HEK293 (cell line): ENCODE measurements at regions of chr3 and their contacts with region 1.

Region 1: GRCh38 chr3:13461169-13462158 is 18.6 kb upstream of the HDAC11 start:
- H3K4me3 ChIP-seq: no peak overlapping the region
- H3K27ac ChIP-seq: no peak overlapping the region
- H3K4me1 ChIP-seq: no peaks in the 10 kb centered on the region
- CTCF ChIP-seq: peak; percentile 51; the same call in 1 of the 2 replicates

Region 2: DNA sequence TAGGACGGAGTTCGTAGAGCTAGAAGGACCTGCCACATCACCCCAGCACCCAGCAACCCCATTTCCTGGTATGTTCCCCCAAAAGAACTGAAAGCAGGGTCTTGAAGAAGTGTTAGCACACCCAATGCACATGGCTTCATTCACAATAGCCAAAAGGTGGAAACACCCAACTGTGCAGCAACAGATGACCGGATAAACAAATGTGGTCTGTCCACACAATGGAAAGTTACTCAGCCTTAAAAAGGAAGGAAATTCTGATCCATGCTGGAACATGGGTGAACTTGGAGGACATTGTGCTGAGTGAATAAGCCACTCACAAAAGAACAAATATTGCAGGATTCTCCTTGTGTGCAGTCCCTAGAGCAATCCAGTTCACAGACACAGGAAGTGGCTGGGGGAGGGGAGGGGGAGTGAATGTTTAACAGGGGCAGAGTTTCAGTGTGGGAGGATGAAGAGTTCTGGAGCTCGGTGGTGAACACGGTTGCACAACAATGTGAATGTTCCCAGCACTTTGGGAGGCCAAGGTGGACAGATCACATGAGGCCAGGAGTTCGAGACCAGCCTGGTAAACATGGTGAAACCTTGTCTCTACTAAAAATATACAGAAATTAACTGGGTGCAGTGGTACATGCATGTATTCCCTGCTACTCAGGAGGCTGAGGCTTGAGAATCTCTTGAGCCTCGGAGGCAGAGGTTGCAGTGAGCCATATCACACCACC is 198.8 kb before region 1 on chr3:
- CTCF ChIA-PET with region 1: no interaction called
- POLR2A ChIA-PET with region 1: no interaction called
- H3K4me3 ChIP-seq: no peak overlapping the region
- H3K27ac ChIP-seq: no peak overlapping the region
- H3K4me1 ChIP-seq: no peaks in the 10 kb centered on the region
- CTCF ChIP-seq: no peak

Region 3: DNA sequence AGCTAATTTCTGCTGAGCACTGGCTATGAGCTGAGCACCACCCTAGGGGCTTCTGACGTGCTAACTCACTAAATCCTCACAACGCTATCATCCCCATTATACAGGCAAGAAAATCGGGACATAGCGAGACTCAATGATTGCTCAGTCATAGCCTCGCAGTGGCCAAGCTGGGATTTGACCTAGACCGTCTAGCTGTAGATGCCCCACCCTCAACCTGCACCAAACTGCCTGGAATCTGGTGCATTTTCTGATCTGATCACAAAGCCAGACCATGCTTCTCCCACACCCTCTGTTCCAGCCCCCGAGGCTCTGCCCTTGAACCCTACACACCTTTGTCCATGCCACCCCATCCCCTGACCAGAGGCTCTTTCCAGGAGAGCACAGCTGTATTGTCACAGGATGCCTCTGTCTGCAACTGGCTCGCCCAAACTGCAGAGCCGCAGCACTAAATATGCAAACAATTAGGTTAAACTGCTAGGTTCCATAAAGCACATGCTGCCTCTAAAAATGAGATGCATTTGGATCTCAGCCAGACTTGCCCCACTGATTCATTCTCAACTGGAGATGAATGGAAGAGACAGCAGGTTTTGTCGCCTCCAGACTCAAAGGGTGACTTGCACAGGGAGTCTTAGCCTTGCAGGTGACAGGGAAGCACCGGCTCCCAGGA is 136.5 kb before region 1 on chr3:
- CTCF ChIA-PET with region 1: interaction called, 11 read pairs
- POLR2A ChIA-PET with region 1: no interaction called
- H3K4me3 ChIP-seq: no peak overlapping the region
- H3K27ac ChIP-seq: no peak overlapping the region
- H3K4me1 ChIP-seq: no peaks in the 10 kb centered on the region
- CTCF ChIP-seq: no peak

Region 4: DNA sequence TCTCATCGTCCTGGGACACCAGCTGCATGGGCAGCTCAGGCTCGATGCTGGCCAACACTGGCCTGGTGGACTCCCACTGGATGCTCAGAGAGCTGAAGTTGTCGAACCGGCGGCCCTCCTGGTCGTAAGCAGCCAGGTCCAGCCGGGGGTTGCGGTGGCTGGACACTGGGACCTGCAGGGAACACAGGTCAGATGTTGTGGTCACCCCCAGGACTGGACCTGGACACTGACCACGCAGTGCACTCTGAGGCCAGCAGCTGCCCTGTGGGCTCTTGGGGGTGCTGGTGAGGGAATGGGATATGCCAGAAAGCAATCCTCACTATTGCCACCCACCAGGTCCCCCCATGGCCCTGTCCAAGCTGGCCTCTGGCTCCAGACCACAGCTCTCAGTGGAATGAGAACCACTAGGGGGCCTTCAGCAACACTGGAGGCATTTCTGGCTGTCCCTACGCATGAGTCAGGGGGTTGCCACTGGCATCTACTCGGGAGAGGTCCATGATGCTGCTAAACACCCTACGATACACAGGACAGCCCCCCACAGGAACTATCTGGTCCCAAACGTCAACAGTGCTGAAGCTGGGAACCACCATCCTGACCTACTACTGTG is 107.4 kb before region 1 on chr3:
- CTCF ChIA-PET with region 1: interaction called, 10 read pairs
- POLR2A ChIA-PET with region 1: no interaction called
- H3K4me3 ChIP-seq: no peak overlapping the region
- H3K27ac ChIP-seq: no peak overlapping the region
- H3K4me1 ChIP-seq: no peaks in the 10 kb centered on the region
- CTCF ChIP-seq: no peak

Region 5: DNA sequence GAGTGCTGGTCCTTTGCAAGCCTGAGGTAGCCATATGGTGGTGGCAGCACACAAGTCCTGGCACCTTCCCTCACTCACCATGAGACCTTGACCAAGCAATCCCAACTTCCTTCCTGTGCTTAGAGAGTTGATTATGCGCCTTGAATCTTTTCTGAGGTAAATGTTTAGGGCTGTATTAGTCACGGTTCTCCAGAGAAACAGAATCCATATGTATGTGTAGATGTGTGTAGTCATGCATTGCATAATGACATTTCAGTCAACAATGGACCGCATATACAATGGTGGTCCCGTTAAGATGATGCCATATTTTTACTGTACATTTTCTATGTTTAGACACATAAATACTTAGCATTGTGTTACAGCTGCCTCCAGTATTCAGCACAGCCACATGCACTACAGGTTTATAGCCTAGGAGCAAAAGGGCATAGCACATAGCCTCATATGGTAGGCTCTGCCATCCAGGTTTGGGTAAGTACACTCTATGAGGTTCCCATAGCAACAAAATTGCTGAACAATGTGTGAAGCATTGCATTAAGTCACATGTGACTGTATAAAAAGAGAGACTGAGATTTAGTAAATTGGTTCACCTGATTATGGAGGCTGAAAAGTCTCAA is 21.2 kb before region 1 on chr3:
- CTCF ChIA-PET with region 1: no interaction called
- POLR2A ChIA-PET with region 1: no interaction called
- H3K4me3 ChIP-seq: no peak overlapping the region
- H3K27ac ChIP-seq: no peak overlapping the region
- H3K4me1 ChIP-seq: no peaks in the 10 kb centered on the region
- CTCF ChIP-seq: no peak

Region 6: DNA sequence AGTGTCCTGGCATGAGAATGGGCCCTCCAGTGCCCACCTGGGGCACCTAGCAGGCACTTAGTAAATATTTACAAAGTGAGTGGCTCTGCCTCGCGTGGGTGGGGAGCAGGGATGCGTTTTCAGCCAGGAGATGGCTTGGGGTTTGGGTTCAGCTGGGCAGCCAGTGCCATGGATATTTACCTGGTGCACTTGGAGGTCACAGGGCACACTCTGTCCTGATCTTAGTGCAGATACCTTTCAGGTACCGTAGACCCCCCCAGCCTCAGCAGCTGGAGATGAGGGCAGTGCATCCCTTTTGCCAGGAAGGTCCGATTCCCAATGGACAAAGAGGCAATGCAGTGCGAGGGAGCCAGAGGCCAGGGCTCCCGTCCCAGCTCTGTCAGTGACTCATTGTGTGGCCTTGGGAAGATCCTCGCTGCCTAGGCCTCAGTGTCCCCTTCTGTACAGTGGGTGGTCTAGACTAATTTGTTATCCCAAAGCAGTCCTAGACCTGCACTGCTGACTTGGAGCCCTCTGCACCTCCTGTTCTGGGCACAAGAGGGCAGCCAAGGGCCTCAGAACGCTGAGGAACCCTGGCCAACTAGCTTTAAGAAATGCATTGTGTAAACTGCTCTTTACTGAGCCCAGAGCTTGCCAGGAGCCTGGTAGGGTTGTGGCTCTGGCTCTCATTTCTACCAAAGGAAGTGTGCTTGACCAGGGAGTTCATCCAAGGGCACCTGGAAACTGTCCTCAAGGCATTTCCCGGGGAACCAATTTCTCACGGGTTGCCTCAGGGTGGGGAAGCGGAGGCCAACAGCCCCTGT is 34.7 kb after region 1 on chr3:
- CTCF ChIA-PET with region 1: interaction called, 12 read pairs
- POLR2A ChIA-PET with region 1: no interaction called
- H3K4me3 ChIP-seq: no peak overlapping the region
- H3K27ac ChIP-seq: no peak overlapping the region
- H3K4me1 ChIP-seq: no peaks in the 10 kb centered on the region
- CTCF ChIP-seq: peak; percentile 83

Region 7: DNA sequence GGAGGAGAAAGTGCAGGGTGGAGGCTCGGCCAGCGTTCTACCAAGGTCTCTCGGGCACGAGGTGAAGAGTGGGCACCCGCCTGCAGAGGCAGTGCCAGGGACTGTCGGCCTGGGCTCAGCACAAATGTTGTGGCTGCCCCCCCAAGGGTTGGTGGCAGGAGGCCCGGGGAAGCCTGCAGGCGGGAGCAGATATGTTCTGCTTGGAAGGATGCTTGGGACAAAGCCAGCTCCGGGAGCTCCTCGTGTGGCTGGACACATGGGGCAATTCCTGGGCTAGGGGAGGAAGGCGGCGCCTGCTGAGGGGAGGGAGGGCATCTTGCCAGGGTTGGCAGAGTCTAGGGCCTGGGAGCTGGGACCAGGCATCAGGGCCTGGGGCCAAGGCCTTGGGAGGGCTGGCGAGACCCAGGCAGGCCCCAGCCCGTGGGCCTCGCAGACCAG is 57.1 kb after region 1 on chr3:
- CTCF ChIA-PET with region 1: no interaction called
- POLR2A ChIA-PET with region 1: no interaction called
- H3K4me3 ChIP-seq: no peak overlapping the region
- H3K27ac ChIP-seq: no peak overlapping the region
- H3K4me1 ChIP-seq: no peaks in the 10 kb centered on the region
- CTCF ChIP-seq: no peak

Region 8: DNA sequence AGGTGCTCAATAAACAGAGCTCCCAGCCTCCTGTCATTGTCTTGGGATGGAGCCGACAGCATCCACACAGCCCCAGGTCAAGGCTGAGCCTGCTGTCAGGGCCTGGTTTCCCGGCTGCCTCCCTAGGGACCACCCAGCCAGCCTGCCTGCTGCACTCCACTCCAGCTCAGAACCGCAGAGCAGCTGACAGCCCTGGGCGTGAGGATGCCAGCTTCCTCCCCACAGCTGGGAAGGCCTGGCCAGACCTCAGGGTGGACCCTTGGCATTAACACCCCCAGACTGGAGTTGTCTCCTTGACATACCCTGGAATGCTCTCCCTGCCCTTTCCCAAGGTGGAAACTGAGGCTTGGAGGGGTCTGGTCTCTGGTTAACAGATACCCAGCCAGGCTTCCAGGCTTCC is 306.4 kb after region 1 on chr3:
- CTCF ChIA-PET with region 1: no interaction called
- POLR2A ChIA-PET with region 1: no interaction called
- H3K4me3 ChIP-seq: no peak overlapping the region
- H3K27ac ChIP-seq: no peak overlapping the region
- H3K4me1 ChIP-seq: no peaks in the 10 kb centered on the region
- CTCF ChIP-seq: no peak